ENCODE measurements at regions of chr14 and their contacts with region 1.

Region 1: GRCh38 chr14:92577321-92577742 is 63.8 kb downstream of the RIN3 start:
- DNase-seq: peak; percentile 63
- ATAC-seq: peak; percentile 85
- H3K4me3 ChIP-seq: peak overlapping the region in 3 of 5 experiments; percentile 12 to 46 (median 36)
- H3K4me3 Mint-ChIP-seq: peak overlapping the region; percentile 71
- H3K27ac ChIP-seq: peak overlapping the region; percentile 42 to 63
- H3K27ac Mint-ChIP-seq: peak overlapping the region; percentile 79
- H3K4me1 ChIP-seq: peaks cover 31 to 48% of the 10 kb centered on the region in 2 donors
- H3K4me1 Mint-ChIP-seq: peaks cover 61% of the 10 kb centered on the region
- H3K27me3 ChIP-seq: no peaks in the 10 kb centered on the region
- H3K27me3 Mint-ChIP-seq: no peaks in the 10 kb centered on the region
- CTCF ChIP-seq: no peak

Region 2: DNA sequence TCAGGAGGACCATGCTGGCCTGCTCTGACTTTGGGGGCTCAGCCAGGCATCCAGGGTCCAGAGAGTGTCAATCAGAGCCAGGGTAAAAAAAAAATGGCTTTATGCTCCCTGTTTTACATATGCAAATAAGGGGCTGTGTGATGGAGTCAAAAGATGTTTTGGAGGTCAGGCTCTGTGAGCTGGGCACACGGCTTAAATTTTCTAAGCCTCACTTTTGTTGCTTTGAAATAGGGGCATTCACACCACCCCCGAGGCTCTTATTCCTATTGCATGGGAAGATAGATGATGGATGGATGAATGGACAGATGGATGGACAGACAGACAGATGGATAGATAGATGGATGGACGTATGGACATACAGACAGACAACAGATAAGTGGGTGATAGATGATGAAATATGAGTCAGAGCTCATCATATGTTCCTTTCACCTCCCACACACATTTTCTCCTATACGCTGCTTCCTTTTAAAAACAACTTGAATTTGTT is 21.0 kb before region 1 on chr14:
- CTCF ChIA-PET with region 1: interaction called, 13 read pairs
- POLR2A ChIA-PET with region 1: no interaction called
- intact Hi-C with region 1: loop called (anchors 1 kb)
- DNase-seq: no peak
- ATAC-seq: peak; percentile 8
- H3K4me3 ChIP-seq: no peak overlapping the region
- H3K4me3 Mint-ChIP-seq: peak overlapping the region; percentile 70
- H3K27ac ChIP-seq: no peak overlapping the region
- H3K27ac Mint-ChIP-seq: peak overlapping the region; percentile 22
- H3K4me1 ChIP-seq: peaks cover 39% of the 10 kb centered on the region in 2 donors
- H3K4me1 Mint-ChIP-seq: peaks cover 39% of the 10 kb centered on the region
- H3K27me3 ChIP-seq: peaks cover 0 to 17% (median 6%) of the 10 kb centered on the region in 4 experiments
- H3K27me3 Mint-ChIP-seq: peaks cover 20% of the 10 kb centered on the region
- CTCF ChIP-seq: no peak

Measured in B cell (primary cell).